ENCODE measurements at regions of chr18 and their contacts with region 1.

Region 1: GRCh38 chr18:26383454-26384270 is 157.4 kb downstream of the TAF4B start:
- DNase-seq: peak; percentile 19 to 63
- ATAC-seq: peak; percentile 64 to 82; a peak in 4 of 6 replicates
- H3K4me3 ChIP-seq: no peak overlapping the region
- H3K27ac ChIP-seq: peak overlapping the region; percentile 34 to 78; a peak in 4 of 6 replicates
- H3K4me1 ChIP-seq: peaks cover 20% of the 10 kb centered on the region
- CTCF ChIP-seq: peak; percentile 66
- EP300 ChIP-seq: no peak
- POLR2A ChIP-seq: no peak
- RAD21 ChIP-seq: peak; percentile 49 to 61

Region 2: GRCh38 chr18:26370037-26370436 is 13.6 kb before region 1 on chr18:
- CTCF ChIA-PET with region 1: interaction called, 10 read pairs
- POLR2A ChIA-PET with region 1: no interaction called
- DNase-seq: no peak
- ATAC-seq: no peak
- H3K4me3 ChIP-seq: no peak overlapping the region
- H3K27ac ChIP-seq: no peak overlapping the region
- H3K4me1 ChIP-seq: no peaks in the 10 kb centered on the region
- CTCF ChIP-seq: no peak
- EP300 ChIP-seq: no peak
- POLR2A ChIP-seq: no peak
- RAD21 ChIP-seq: no peak

Region 3: DNA sequence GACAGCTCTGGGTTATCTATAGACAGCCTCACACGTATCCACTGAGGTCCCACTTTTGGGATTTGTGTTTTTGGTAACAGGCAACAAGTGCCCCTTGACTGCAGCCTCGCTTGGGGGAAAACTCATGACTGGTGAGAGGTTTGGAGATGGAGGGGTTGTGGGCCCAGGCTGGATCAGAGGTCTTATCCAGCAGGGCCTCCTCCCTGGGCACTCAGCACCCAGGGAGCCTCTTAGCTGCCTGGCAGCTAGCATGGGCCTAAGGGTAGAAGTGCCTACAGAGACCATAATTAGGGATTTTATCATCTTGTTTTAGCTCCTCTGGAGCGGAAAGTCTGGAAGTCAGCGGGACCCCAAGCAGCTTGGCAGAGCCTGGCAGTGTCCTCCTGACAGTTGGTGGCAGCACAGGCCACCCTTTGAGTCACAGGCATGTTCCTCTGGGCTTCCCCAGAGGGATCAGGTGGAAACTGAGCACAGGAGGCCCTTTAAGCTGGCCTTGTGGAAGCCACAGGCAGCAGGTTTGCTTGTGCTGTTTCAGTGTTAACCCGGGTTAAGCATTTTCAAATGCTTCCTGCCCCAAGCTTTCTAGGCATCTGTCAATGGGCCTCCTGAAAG is 21.6 kb after region 1 on chr18:
- CTCF ChIA-PET with region 1: interaction called, 15 read pairs
- POLR2A ChIA-PET with region 1: no interaction called
- DNase-seq: peak; percentile 32 to 68
- ATAC-seq: peak; percentile 90 to 95
- H3K4me3 ChIP-seq: no peak overlapping the region
- H3K27ac ChIP-seq: peak overlapping the region; percentile 70 to 79
- H3K4me1 ChIP-seq: peaks cover 8% of the 10 kb centered on the region; the same call in 2 of the 3 replicates
- CTCF ChIP-seq: peak; percentile 59
- EP300 ChIP-seq: no peak
- POLR2A ChIP-seq: no peak
- RAD21 ChIP-seq: peak; percentile 85 to 87

Region 4: DNA sequence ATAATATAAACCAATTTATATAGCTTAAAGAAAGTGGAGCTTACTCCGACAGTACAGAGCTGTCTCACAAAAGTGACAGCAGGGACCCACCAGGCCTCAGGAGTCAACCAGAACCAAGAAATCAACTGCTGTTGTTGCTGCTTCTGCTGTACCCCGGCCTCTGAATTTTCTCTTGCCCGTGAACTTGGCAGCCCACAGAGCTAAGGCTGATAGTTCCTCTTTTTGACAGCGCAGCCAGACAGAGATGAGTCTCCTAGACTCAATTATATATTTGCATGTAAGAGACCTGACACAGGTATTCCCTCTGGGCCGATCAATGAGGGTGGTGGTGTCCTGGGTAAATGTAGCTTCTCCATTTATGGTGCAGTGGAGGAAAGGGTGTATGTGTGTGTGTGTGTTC is 55.3 kb after region 1 on chr18:
- CTCF ChIA-PET with region 1: interaction called, 13 read pairs
- POLR2A ChIA-PET with region 1: no interaction called
- DNase-seq: no peak
- ATAC-seq: no peak
- H3K4me3 ChIP-seq: no peak overlapping the region
- H3K27ac ChIP-seq: peak overlapping the region in 1 of 2 experiments; percentile 64; a peak in 4 of 6 replicates
- H3K4me1 ChIP-seq: peaks cover 26% of the 10 kb centered on the region
- CTCF ChIP-seq: no peak
- EP300 ChIP-seq: no peak
- POLR2A ChIP-seq: no peak
- RAD21 ChIP-seq: no peak

Region 5: DNA sequence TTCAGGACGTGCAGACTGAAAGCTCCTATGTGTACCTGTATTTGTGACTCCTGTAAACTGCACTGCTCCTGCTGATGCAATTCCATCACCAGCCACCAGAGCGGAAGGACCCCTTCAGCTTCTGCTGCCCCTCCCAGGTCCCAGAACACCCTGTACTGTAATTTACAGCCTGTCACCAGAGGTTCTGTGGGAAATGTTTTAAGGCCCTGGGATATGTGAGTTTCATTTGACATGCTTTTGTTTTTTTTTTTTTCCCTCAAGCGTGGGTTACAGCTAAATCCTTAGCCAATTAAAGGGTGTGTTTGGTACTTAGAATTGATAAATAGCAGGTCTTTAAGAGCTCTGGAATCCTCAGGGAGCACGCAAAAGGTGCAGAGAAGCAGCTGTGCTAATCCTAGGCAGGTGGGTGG is 85.3 kb after region 1 on chr18:
- CTCF ChIA-PET with region 1: interaction called, 11 read pairs
- POLR2A ChIA-PET with region 1: no interaction called
- DNase-seq: peak in 1 of 2 experiments; percentile 65
- ATAC-seq: peak; percentile 73 to 83; a peak in 5 of 6 replicates
- H3K4me3 ChIP-seq: no peak overlapping the region
- H3K27ac ChIP-seq: peak overlapping the region; percentile 95 to 97
- H3K4me1 ChIP-seq: peaks cover 59% of the 10 kb centered on the region
- CTCF ChIP-seq: no peak
- EP300 ChIP-seq: no peak
- POLR2A ChIP-seq: no peak
- RAD21 ChIP-seq: peak in 1 of 2 experiments; percentile 12; a peak in 2 of 5 replicates

Region 6: GRCh38 chr18:26584745-26585144 is 201.1 kb after region 1 on chr18:
- CTCF ChIA-PET with region 1: no interaction called
- POLR2A ChIA-PET with region 1: no interaction called
- DNase-seq: no peak
- ATAC-seq: no peak
- H3K4me3 ChIP-seq: no peak overlapping the region
- H3K27ac ChIP-seq: no peak overlapping the region
- H3K4me1 ChIP-seq: peaks cover 13% of the 10 kb centered on the region
- CTCF ChIP-seq: no peak
- EP300 ChIP-seq: no peak
- POLR2A ChIP-seq: no peak
- RAD21 ChIP-seq: no peak

Measured in A549 (cell line).